Psoas muscle (tissue), 8 donors: ENCODE measurements at regions of chr1 and their contacts with region 1.

Region 1: DNA sequence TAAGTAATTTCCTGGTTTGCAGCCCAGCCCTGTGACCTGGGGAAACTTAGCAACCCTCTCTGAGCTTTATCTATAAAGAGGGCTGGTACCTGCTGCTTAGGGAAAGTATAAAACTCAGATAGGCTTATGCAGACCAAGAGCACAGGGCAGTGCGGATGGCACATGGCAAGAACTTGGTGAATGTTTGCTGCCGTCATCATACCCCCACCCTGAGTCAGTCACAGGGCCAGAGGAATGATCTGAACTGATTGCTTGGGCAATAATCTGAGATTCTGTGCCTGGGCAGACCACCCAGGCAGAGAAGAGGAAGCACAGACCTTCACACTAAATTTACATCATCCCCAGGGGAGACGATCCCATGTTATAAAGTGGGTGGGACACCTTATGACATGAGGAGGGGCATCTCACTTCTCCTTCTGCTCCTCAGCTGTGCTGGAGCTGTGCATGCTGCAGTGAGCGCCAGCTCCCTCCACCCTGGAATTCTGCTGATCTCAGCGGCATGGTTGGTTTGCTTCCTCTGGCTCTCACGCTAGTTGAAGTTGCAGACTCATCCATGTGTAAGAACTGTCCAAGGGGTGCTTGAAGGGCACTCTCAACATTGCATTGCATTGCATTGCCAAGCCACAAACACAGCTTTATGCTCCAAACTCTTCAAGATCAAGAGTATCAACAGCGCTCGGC is 197.1 kb downstream of the AJAP1 start:
- DNase-seq: no peak
- ATAC-seq: no peak
- H3K4me3 ChIP-seq: no peak overlapping the region
- H3K27ac ChIP-seq: no peak overlapping the region
- H3K4me1 ChIP-seq: no peaks in the 10 kb centered on the region
- H3K27me3 ChIP-seq: peaks cover 0 to 2% (median 0%) of the 10 kb centered on the region in 3 donors
- CTCF ChIP-seq: no peak

Region 2: DNA sequence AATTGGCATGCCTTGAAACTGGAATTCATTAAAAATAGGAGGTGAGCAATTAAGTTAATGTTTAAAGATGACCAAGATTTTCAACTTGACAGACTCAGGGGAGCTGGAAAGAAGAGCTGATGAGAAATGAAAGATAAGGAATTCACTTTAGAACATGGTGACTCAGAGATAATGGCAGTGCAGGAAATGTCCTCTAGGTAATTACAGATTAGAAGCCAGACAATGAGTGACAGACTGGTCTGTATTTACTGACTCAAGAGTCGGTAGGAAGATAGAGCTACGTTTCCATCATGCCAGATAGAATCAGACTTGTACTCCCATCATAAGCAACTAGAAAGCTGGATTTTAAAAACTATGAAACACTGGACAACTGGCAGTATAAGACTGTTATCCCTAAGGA is 45.5 kb before region 1 on chr1:
- intact Hi-C with region 1: loop called in 1 of 2 experiments (anchors 2 kb)
- DNase-seq: no peak
- ATAC-seq: no peak
- H3K4me3 ChIP-seq: no peak overlapping the region
- H3K27ac ChIP-seq: no peak overlapping the region
- H3K4me1 ChIP-seq: no peaks in the 10 kb centered on the region
- H3K27me3 ChIP-seq: peaks cover 0 to 4% (median 0%) of the 10 kb centered on the region in 3 donors
- CTCF ChIP-seq: no peak